ENCODE measurements at regions of chr16 and their contacts with region 1.

Region 1: GRCh38 chr16:28504707-28505409 is 1.8 kb downstream of the IL27 start:
- DNase-seq: no peak
- ATAC-seq: peak in 1 of 2 donors; percentile 60

Region 2: GRCh38 chr16:28543072-28543471 is 38.2 kb after region 1 on chr16:
- intact Hi-C with region 1: loop called in 1 of 2 experiments (anchors 5 kb)
- DNase-seq: no peak
- ATAC-seq: no peak